Activated CD8-positive, alpha-beta memory T cell treated with anti-CD3 and anti-CD28 coated beads, Interleukin-2, amount 10 ng/mL, durations not matched to agents 7 days and 5 days (primary cell): ENCODE measurements at regions of chr1 and their contacts with region 1.

Region 1: GRCh38 chr1:182397771-182398393 is 2.6 kb downstream of the TEDDM1 start:
- DNase-seq: no peak
- ATAC-seq: no peak
- H3K4me3 Mint-ChIP-seq: no peak overlapping the region
- H3K27ac Mint-ChIP-seq: no peak overlapping the region
- H3K4me1 Mint-ChIP-seq: peaks cover 4% of the 10 kb centered on the region
- H3K27me3 Mint-ChIP-seq: peaks cover 38% of the 10 kb centered on the region

Region 2: DNA sequence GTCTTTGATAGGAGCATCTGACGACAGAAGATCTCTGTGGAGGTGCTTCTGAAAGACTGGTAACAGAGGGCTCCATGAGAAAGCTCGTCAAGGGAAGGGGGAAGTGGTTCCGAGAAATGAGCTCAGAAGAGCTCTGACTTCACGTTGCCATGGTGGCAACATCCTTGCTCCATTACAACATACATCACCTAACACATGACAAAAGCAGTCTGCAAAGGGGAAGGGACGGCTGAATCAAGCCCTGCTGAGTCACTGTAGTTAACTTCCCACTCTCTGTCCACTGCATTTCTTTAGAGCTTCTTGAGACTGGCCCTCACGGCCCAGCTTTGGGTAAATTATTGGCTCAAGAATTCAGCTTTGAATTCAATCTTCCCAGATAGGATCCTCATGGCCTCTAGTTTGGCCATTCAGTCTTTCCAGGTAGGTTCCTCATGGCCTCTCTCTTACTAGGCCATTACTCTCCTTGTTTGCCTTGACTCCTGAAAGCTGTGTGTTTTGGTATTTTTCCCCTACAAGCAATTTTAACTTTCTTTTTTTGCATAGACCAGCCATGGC is 248.4 kb before region 1 on chr1:
- CTCF ChIA-PET with region 1: interaction called, 179 read pairs
- DNase-seq: peak; percentile 61
- ATAC-seq: peak; percentile 87
- H3K4me3 Mint-ChIP-seq: no peak overlapping the region
- H3K27ac Mint-ChIP-seq: peak overlapping the region; percentile 39
- H3K4me1 Mint-ChIP-seq: peaks cover 35% of the 10 kb centered on the region
- H3K27me3 Mint-ChIP-seq: no peaks in the 10 kb centered on the region

Region 3: GRCh38 chr1:182625716-182626503 is 228.0 kb after region 1 on chr1:
- CTCF ChIA-PET with region 1: no interaction called
- DNase-seq: no peak
- ATAC-seq: no peak
- H3K4me3 Mint-ChIP-seq: no peak overlapping the region
- H3K27ac Mint-ChIP-seq: no peak overlapping the region
- H3K4me1 Mint-ChIP-seq: peaks cover 49% of the 10 kb centered on the region
- H3K27me3 Mint-ChIP-seq: peaks cover 49% of the 10 kb centered on the region